ENCODE measurements at regions of chr12 and their contacts with region 1.

Region 1: DNA sequence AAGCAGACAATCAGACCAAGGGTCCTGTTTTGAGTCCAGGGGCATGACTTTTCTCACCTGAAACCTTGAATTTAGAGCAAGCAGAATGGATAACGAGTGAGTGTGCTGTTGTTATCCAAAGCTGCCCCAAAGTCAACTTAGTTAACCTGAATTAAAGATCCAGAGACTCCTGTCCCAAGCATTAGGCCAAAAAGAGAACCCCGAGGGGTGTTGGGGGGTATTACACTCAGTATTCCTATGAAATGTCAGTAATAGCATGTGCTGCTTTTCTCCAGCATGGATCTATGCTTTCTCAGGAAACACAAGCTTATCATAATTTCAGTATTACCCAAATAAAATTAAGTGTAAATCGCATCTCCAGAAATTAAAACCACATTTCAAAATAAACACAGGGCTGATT is 19.0 kb downstream of the EIF4B start:
- DNase-seq: no peak
- CTCF ChIP-seq: no peak

Region 2: GRCh38 chr12:52799062-52799761 is 226.0 kb before region 1 on chr12:
- CTCF ChIA-PET with region 1: no interaction called
- POLR2A ChIA-PET with region 1: no interaction called
- DNase-seq: no peak
- CTCF ChIP-seq: no peak

Region 3: GRCh38 chr12:53047221-53048042 is 22.2 kb after region 1 on chr12:
- CTCF ChIA-PET with region 1: interaction called, 26 read pairs
- POLR2A ChIA-PET with region 1: no interaction called
- DNase-seq: peak; percentile 88
- CTCF ChIP-seq: peak; percentile 75

Region 4: DNA sequence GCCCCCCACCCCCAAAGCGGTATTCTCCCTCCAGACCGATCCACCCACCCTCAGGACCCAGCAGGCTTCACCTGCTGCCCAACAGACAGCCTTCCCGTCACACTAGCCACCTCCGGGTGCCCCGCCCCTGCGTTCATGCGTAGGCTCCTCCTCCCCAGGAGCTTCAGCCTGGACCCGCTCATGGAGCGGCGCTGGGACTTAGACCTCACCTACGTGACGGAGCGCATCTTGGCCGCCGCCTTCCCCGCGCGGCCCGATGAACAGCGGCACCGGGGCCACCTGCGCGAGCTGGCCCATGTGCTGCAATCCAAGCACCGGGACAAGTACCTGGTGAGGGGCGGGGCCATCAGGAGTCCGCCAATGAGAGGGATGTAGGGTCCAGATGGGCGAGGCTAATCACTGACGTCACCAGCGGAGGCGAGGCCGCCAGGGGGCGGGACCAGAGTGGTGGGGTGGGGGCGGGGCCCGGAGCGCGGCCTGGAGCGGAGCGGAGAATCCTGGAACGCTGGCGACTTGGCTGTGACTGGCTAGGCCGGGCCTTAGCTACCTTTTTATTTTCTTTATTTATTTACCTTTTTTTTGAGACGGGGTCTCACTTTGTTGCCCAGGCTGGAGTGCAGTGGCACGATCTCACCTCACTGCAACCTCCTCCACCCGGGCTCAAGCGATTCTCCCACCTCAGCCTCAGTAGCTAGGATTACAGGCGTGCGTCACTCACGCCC is 29.0 kb after region 1 on chr12:
- CTCF ChIA-PET with region 1: interaction called, 11 read pairs
- POLR2A ChIA-PET with region 1: no interaction called
- DNase-seq: peak; percentile 95
- CTCF ChIP-seq: no peak